ENCODE measurements at regions of chr17 and their contacts with region 1.

Region 1: GRCh38 chr17:58417300-58418092 is at the start of gene RNF43:
- DNase-seq: peak; percentile 94
- H3K4me3 Mint-ChIP-seq: peak within 1 kb of the TSS; percentile 77
- H3K27ac Mint-ChIP-seq: peak within 1 kb of the TSS; percentile 83
- H3K4me1 Mint-ChIP-seq: peaks cover 20% of the 10 kb centered on the region
- H3K27me3 Mint-ChIP-seq: no peaks in the 10 kb centered on the region
- CTCF ChIP-seq: peak; percentile 45
- total RNA-seq, gene RNF43: 2.9 and 4.5 TPM in 2 replicates

Region 2: DNA sequence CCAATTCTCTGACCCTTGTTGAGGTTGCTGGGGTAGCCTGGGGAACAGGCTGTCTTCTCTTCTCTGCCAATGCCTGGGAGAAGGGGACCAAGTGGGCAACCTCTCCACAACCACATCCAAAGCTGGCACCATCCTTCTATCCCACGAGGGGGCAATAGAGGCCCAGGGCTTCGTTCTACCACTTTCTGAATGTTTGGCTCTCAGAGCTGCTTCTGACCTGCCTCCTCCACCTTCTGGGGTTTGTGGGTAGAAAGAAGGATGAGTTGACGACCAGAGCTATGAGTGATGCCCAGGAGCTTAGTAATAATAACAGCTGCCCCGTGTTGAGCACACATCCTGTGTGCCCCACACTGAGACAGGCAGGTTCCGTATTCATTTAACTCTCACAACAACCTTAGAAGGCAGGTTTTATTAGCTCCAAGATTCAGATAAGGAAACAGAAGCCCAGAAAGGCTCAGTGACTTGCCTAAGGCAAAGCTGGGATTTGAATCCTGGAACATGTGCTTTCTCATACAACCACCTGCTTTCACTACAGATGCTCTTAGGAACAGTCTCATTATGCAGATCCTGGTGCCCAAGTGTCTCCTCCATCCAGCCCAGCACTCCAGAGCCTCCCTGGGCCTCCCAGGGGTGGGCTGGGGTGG is 100.0 kb before region 1 on chr17:
- CTCF ChIA-PET with region 1: interaction called, 40 read pairs
- intact Hi-C with region 1: loop called (anchors 1 kb)
- DNase-seq: peak; percentile 61
- H3K4me3 Mint-ChIP-seq: no peak overlapping the region
- H3K27ac Mint-ChIP-seq: no peak overlapping the region
- H3K4me1 Mint-ChIP-seq: no peaks in the 10 kb centered on the region
- H3K27me3 Mint-ChIP-seq: peaks cover 80% of the 10 kb centered on the region
- CTCF ChIP-seq: peak; percentile 49

Region 3: GRCh38 chr17:58352014-58352842 is 65.3 kb before region 1 on chr17 and contains the start of gene SUPT4H1:
- CTCF ChIA-PET with region 1: interaction called, 36 read pairs
- intact Hi-C with region 1: loop called (anchors 2 kb)
- DNase-seq: peak; percentile 85
- H3K4me3 Mint-ChIP-seq: peak within 1 kb of the TSS; percentile 99
- H3K27ac Mint-ChIP-seq: peak within 1 kb of the TSS; percentile 93
- H3K4me1 Mint-ChIP-seq: peaks cover 8% of the 10 kb centered on the region
- H3K27me3 Mint-ChIP-seq: no peaks in the 10 kb centered on the region
- CTCF ChIP-seq: no peak
- total RNA-seq, gene SUPT4H1: 40.3 and 46.7 TPM in 2 replicates

Region 4: DNA sequence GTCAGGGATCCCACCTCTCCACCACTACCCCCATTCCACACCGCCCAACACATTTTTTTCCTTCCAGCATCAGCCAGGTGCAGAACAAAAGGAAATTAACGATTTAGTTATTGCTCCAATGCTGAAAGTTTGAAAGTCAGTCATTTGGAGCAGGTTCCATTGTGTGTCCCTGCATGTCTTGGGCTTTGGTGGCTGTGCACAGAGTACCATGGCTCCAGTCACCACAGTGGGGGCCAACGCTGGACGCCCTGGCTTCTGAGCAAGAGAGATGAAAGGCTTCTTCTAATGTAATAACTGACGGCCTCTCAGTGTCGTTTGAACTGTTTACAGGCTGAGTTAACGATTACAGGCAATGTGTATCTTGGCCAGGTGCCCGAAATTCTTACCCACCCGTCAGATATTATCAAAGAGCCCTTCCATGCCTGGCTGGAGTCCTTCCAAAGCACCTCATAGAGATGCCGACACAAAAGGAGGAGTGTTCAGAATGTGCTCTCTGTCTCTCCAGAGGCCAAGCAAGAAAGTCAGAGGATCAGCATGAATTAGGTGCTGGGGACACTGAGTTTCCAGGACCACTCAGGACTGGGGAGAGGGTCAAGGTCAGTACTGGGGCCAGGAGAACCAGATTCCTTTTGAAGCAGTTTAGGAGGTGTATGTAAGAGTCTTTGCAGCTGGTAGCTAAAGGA is 26.1 kb before region 1 on chr17:
- CTCF ChIA-PET with region 1: interaction called, 4 read pairs
- intact Hi-C with region 1: loop called (anchors 2 kb)
- DNase-seq: peak; percentile 85
- H3K4me3 Mint-ChIP-seq: peak overlapping the region; percentile 13
- H3K27ac Mint-ChIP-seq: no peak overlapping the region
- H3K4me1 Mint-ChIP-seq: peaks cover 41% of the 10 kb centered on the region
- H3K27me3 Mint-ChIP-seq: no peaks in the 10 kb centered on the region
- CTCF ChIP-seq: no peak

Region 5: DNA sequence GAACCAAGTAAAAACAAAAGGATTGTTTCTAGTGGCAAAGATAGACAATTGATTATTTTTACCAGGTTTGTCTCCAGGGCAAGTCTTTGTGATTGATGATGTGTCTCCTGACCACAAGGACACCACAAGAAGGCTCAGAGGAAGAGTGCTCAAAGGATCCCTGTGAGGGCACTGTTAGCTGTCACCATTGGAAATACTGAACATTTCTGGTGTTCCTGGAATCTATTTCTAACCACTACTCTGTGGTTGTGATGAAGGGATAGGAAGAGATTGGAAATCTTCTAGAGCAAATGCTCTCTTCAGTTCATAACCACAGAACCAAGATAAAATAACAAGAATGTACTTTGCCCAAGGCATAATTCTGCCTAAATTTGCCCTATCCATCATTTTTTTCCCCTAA is 15.4 kb before region 1 on chr17:
- CTCF ChIA-PET with region 1: interaction called, 6 read pairs
- intact Hi-C with region 1: loop called (anchors 2 kb)
- DNase-seq: no peak
- H3K4me3 Mint-ChIP-seq: no peak overlapping the region
- H3K27ac Mint-ChIP-seq: no peak overlapping the region
- H3K4me1 Mint-ChIP-seq: peaks cover 30% of the 10 kb centered on the region
- H3K27me3 Mint-ChIP-seq: no peaks in the 10 kb centered on the region
- CTCF ChIP-seq: no peak

Region 6: GRCh38 chr17:58503656-58504300 is 86.3 kb after region 1 on chr17:
- CTCF ChIA-PET with region 1: no interaction called
- intact Hi-C with region 1: no loop called
- DNase-seq: no peak
- H3K4me3 Mint-ChIP-seq: no peak overlapping the region
- H3K27ac Mint-ChIP-seq: no peak overlapping the region
- H3K4me1 Mint-ChIP-seq: no peaks in the 10 kb centered on the region
- H3K27me3 Mint-ChIP-seq: no peaks in the 10 kb centered on the region
- CTCF ChIP-seq: no peak